ENCODE measurements at regions of chr9 and their contacts with region 1.

Region 1: DNA sequence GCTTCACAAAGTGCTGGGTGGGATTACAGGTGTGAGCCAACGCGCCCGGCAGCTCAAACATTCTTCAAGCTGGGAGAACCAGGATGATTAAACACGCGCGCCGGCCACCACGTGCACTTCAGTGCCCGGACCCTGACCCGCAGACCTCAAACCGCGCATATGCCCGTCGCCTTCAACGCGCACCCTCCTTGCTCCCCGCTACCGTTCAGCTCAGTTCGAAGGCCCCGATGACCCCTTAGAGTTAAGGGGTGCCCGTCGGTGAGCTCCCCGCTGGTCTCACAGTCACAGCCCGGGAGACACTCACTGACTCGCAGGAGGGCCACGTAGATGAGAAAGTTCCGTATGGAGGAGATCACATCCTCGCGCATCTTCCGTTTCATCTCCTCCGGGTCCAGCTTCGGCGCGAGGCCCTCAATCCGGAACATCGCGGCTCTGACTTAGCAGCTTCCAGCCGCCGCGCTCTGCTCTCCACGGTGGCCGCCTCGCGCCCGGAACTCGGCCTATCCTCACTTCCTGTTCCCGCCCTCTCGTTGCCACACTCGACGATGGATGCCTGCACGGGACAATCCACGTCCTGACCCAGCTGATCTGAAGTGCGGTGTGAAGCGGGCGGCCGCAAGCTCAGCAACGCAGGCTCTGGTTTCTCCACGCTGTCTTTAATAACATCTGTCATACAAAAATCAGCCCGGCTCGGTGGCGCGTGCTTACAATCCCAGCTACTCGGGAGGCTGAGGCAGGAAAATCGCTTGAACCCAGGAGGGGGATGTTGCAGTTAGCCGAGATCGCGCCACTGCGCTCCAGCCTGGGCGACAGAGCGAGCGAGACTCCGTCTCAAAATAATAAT is at the start of gene TOMM5:
- DNase-seq: peak; percentile 89
- ATAC-seq: peak; percentile 96
- H3K4me3 Mint-ChIP-seq: peak within 1 kb of the TSS; percentile 98
- H3K27ac Mint-ChIP-seq: peak within 1 kb of the TSS; percentile 99
- H3K4me1 Mint-ChIP-seq: peaks cover 30% of the 10 kb centered on the region
- H3K27me3 Mint-ChIP-seq: peaks cover 17% of the 10 kb centered on the region
- total RNA-seq, gene TOMM5: 68.2 to 74.1 TPM

Region 2: GRCh38 chr9:37079370-37080164 is 512.8 kb before region 1 on chr9:
- POLR2A ChIA-PET with region 1: interaction called, 10 read pairs
- DNase-seq: peak; percentile 84
- ATAC-seq: peak; percentile 97
- H3K4me3 Mint-ChIP-seq: peak overlapping the region; percentile 91
- H3K27ac Mint-ChIP-seq: peak overlapping the region; percentile 95
- H3K4me1 Mint-ChIP-seq: peaks cover 29% of the 10 kb centered on the region
- H3K27me3 Mint-ChIP-seq: no peaks in the 10 kb centered on the region

Region 3: DNA sequence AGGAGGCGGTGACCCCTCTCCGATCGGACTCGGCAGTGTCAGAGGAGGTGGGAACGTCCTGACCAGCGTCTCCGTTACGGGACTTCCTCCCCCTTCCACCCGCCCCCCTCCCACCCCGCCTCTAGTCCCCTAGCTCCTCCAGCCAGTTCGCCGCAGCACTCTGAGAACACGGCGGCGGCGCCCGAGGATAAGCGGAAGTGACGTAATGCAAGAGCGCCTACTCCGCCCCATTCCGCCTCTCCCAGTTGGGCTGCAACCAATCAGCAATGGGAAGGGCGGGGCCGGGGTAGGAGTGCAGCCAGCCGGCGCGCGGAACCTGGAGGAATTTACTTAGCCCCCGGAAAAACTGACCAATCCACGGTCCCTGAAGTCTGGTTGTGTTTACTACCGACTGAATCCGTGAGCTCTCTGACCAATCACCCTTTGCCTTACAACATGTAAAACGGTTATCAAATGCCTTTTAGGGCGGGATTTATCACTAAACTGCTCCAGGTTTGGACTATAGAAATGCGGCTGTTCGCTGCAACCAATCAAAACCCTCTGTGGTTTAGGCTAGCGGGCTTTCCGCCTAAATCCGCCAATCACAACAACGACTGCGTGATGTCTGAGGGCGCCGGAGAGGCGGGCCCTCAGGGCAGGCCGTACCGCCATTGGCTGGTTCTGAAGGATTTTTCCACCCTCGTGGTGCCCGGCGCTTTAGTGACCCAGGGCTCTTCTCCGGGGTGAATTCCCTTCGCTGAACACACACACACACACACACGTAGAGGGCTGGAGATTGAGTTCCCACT is 126.9 kb before region 1 on chr9 and contains the start of gene ZBTB5:
- POLR2A ChIA-PET with region 1: interaction called, 10 read pairs
- DNase-seq: peak; percentile 95
- ATAC-seq: peak; percentile 80
- H3K4me3 Mint-ChIP-seq: peak within 1 kb of the TSS; percentile 96
- H3K27ac Mint-ChIP-seq: peak within 1 kb of the TSS; percentile 95
- H3K4me1 Mint-ChIP-seq: peaks cover 25% of the 10 kb centered on the region
- H3K27me3 Mint-ChIP-seq: no peaks in the 10 kb centered on the region
- total RNA-seq, gene ZBTB5: 12.5 to 13.3 TPM

Region 4: GRCh38 chr9:37485389-37486219 is 106.7 kb before region 1 on chr9 and contains the start of gene POLR1E:
- POLR2A ChIA-PET with region 1: interaction called, 27 read pairs
- DNase-seq: peak; percentile 99
- ATAC-seq: peak; percentile 98
- H3K4me3 Mint-ChIP-seq: peak within 1 kb of the TSS; percentile 98
- H3K27ac Mint-ChIP-seq: peak within 1 kb of the TSS; percentile 96
- H3K4me1 Mint-ChIP-seq: peaks cover 27% of the 10 kb centered on the region
- H3K27me3 Mint-ChIP-seq: peaks cover 10% of the 10 kb centered on the region
- total RNA-seq, gene POLR1E: 33.0 to 36.5 TPM

Region 5: DNA sequence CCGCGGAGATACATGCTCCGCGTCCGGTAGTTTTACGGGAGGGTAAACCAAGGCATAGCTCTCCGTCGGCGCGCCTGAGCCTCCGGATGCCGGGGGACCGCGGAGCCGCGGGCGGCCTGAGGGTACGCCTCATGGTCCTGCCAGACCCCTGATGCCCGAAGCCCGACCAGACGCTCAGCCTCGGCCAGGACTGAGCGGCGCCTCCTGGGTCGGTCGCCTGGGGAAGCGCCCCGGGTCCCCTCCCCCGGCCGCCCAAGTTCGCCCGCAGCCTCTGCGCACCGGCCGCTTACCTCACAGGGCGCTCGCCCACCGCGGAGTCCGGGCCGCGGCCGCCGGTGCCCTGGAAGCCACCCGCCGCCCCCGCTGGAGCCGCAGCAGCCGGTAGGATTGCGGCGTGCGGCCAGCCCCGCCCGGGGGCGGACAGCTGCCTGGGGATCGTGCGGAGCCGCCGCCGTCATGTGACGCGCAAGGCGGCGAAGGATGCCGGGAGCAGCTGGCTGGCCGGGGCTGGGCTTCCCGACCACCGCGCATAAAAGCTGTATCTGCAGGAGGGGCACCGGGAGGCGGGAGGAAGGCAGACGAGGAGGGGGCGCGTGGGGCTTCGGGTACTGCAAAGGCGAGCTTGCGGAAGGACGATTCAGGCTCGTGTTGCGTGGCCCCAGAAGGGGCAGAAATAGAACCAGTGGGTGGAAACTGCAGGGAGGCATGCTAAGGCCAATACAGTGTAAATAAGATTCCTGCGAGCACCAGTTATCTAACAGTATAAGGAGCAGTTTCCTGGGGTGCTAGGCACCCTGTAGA is 16.2 kb before region 1 on chr9 and contains the start of gene FBXO10:
- POLR2A ChIA-PET with region 1: interaction called, 17 read pairs
- DNase-seq: peak; percentile 74
- ATAC-seq: peak; percentile 84
- H3K4me3 Mint-ChIP-seq: peak within 1 kb of the TSS; percentile 89
- H3K27ac Mint-ChIP-seq: peak within 1 kb of the TSS; percentile 77
- H3K4me1 Mint-ChIP-seq: peaks cover 8% of the 10 kb centered on the region
- H3K27me3 Mint-ChIP-seq: no peaks in the 10 kb centered on the region
- total RNA-seq, gene FBXO10: 1.5 to 1.6 TPM

Region 6: DNA sequence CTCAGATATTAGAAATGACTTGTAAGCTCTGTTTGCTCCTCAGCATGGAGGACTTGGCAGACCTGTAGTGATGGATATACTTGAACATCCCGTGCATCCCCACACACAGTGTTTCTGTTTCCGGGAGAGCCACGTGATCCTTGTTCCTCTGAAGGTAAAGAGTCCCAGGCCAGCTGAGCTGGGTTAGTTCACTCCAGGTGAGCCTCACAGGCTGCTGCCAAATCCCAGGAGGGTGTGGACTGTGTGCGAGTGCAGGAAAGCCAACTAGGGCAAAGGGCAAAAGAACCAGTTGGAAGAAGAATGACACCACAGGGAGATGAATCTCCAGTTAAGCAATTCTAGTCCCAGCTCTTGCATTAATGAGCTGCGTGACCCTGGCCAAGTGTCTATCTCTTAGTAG is 10.5 kb after region 1 on chr9:
- POLR2A ChIA-PET with region 1: no interaction called
- DNase-seq: no peak
- ATAC-seq: no peak
- H3K4me3 Mint-ChIP-seq: no peak overlapping the region
- H3K27ac Mint-ChIP-seq: no peak overlapping the region
- H3K4me1 Mint-ChIP-seq: no peaks in the 10 kb centered on the region
- H3K27me3 Mint-ChIP-seq: peaks cover 42% of the 10 kb centered on the region

Measured in activated naive CD8-positive, alpha-beta T cell treated with anti-CD3 and anti-CD28 coated beads, Interleukin-2, amount 10 ng/mL, durations not matched to agents 7 days and 5 days (primary cell).